ENCODE measurements at regions of chr3 and their contacts with region 1.

Region 1: DNA sequence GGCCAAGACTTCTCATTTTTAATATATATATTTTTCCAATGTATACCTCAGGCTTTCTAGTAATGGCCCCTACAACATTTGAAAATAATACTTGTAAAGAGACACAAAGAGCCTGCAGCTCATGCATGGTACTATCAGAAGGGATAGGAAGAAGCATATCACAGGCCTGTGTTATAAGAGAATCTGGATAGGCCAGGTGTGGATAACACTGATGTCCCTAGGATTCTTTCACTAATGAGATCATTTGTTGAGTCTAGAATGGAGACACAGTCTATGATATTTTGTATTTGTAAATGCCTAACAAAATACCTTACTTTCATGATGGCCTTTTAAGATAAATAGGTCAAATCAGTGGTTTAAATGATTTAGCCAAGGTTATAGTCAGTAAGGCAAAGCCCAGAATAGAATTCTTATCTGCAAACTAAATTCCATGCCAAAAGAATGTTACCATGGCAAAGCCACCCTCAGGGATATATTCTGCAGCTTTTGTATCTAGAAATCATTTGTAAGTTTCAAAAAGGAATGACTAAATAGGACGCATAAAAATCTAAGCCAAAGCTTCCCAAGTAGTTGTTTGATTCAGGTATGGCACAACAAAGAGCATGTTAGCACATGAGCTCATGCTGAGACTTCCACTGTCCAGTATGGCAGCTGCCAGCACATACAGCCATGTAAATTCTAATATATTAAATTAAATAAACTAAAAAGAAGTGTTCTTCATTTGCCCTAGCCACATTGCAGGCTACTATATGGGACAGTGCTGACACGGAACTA is 10.0 kb downstream of the DCP1A start:
- DNase-seq: no peak
- ATAC-seq: no peak
- H3K4me3 ChIP-seq: no peak overlapping the region
- H3K4me3 Mint-ChIP-seq: no peak overlapping the region
- H3K27ac ChIP-seq: no peak overlapping the region
- H3K27ac Mint-ChIP-seq: no peak overlapping the region
- H3K4me1 ChIP-seq: no peaks in the 10 kb centered on the region
- H3K4me1 Mint-ChIP-seq: peaks cover 1% of the 10 kb centered on the region
- H3K27me3 ChIP-seq: no peaks in the 10 kb centered on the region
- H3K27me3 Mint-ChIP-seq: no peaks in the 10 kb centered on the region
- CTCF ChIP-seq: no peak

Region 2: DNA sequence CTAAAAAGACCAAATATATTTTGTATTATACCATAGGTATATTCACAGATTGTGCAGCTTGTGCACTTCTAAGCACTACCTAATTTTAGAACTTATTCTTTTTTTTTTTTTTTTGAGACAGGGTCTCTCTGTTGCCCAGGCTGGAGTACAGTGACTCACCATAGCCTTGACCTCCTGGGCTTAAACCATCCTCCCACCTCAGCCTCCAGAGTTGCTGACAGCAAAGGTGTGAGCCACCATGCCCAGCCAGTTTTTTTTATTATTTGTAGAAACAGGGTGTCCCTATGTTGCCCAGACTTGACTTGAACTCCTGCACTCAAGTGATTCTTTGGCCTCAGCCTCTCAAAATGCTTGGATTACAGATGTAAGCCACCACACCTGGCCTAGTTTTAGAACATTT is 69.6 kb before region 1 on chr3:
- CTCF ChIA-PET with region 1: no interaction called
- POLR2A ChIA-PET with region 1: interaction called, 12 read pairs
- intact Hi-C with region 1: no loop called
- DNase-seq: no peak
- ATAC-seq: no peak
- H3K4me3 ChIP-seq: no peak overlapping the region
- H3K4me3 Mint-ChIP-seq: no peak overlapping the region
- H3K27ac ChIP-seq: no peak overlapping the region
- H3K27ac Mint-ChIP-seq: no peak overlapping the region
- H3K4me1 ChIP-seq: peaks cover 0 to 4% of the 10 kb centered on the region in 2 donors
- H3K4me1 Mint-ChIP-seq: peaks cover 1% of the 10 kb centered on the region
- H3K27me3 ChIP-seq: no peaks in the 10 kb centered on the region
- H3K27me3 Mint-ChIP-seq: no peaks in the 10 kb centered on the region
- CTCF ChIP-seq: no peak